Activated T-helper 1 cell treated with anti-CD3 and anti-CD28 coated beads, Interleukin-12 subunit alpha, Interleukin-12 subunit beta, Interleukin-2, Interleukin-4 antibody, amounts not matched to agents 30 ng/mL and 10 ng/mL and 1 ng/mL, durations not matched to agents 14 hours and 24 hours and 36 hours (primary cell): ENCODE measurements at regions of chr2 and their contacts with region 1.

Region 1: GRCh38 chr2:20661067-20661980 is 5.6 kb upstream of the GDF7 start:
- DNase-seq: peak; percentile 54
- H3K4me3 Mint-ChIP-seq: no peak overlapping the region
- H3K27ac Mint-ChIP-seq: no peak overlapping the region
- H3K4me1 Mint-ChIP-seq: no peaks in the 10 kb centered on the region
- H3K27me3 Mint-ChIP-seq: peaks cover 64% of the 10 kb centered on the region

Region 2: GRCh38 chr2:20781656-20782265 is 120.4 kb after region 1 on chr2:
- intact Hi-C with region 1: loop called (anchors 5 kb)
- DNase-seq: no peak
- H3K4me3 Mint-ChIP-seq: no peak overlapping the region
- H3K27ac Mint-ChIP-seq: no peak overlapping the region
- H3K4me1 Mint-ChIP-seq: peaks cover 6% of the 10 kb centered on the region
- H3K27me3 Mint-ChIP-seq: no peaks in the 10 kb centered on the region

Region 3: GRCh38 chr2:20868377-20868776 is 207.1 kb after region 1 on chr2:
- intact Hi-C with region 1: loop called (anchors 5 kb)
- DNase-seq: peak; percentile 51
- H3K4me3 Mint-ChIP-seq: no peak overlapping the region
- H3K27ac Mint-ChIP-seq: peak overlapping the region; percentile 50
- H3K4me1 Mint-ChIP-seq: peaks cover 14% of the 10 kb centered on the region
- H3K27me3 Mint-ChIP-seq: peaks cover 44% of the 10 kb centered on the region

Region 4: GRCh38 chr2:20916604-20917286 is 255.4 kb after region 1 on chr2:
- intact Hi-C with region 1: loop called (anchors 2 kb)
- DNase-seq: no peak
- H3K4me3 Mint-ChIP-seq: no peak overlapping the region
- H3K27ac Mint-ChIP-seq: no peak overlapping the region
- H3K4me1 Mint-ChIP-seq: no peaks in the 10 kb centered on the region
- H3K27me3 Mint-ChIP-seq: peaks cover 13% of the 10 kb centered on the region

Region 5: GRCh38 chr2:20962939-20963557 is 301.7 kb after region 1 on chr2:
- intact Hi-C with region 1: loop called (anchors 1 kb)
- DNase-seq: peak; percentile 34
- H3K4me3 Mint-ChIP-seq: no peak overlapping the region
- H3K27ac Mint-ChIP-seq: no peak overlapping the region
- H3K4me1 Mint-ChIP-seq: no peaks in the 10 kb centered on the region
- H3K27me3 Mint-ChIP-seq: peaks cover 9% of the 10 kb centered on the region